Body of pancreas (tissue), 4 donors: ENCODE measurements at regions of chr20 and their contacts with region 1.

Region 1: DNA sequence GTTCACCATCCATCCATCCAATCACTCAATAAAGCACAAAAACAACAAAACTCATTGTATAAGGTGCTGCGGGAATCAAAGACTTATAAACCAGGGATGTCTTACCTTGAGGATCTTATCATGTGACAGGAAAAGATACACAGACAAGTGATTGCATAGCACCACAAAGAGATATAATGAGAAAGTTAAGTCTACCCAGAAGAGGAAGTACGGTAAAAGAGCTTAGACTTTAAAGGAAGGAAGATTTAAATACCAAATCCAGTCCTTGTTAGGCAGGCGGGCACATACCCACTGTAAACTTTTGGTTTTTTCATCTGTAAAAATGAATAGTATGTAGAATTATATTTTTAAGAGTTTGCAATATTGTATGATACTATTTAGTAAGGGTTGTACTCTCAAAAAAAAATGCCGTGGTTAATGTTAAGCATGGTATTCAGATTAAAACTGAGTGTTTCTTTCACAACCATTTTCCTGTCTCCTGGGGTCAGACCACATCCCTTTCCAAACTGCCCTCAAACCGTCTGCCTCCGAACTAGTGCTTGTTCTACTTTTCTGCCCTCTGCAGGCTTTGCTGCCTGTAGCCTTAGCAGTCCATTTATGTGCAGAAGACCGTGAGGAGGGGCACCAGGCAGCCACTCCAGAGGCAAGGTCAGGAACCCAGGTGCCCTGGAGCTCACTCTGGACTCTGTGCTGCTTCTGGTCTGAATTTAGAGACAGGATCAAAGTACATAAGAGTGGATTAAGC is 179.5 kb upstream of the SYNDIG1 start:
- DNase-seq: no peak
- ATAC-seq: no peak
- H3K4me3 ChIP-seq: no peak overlapping the region
- H3K27ac ChIP-seq: no peak overlapping the region
- H3K4me1 ChIP-seq: no peaks in the 10 kb centered on the region
- H3K27me3 ChIP-seq: no peaks in the 10 kb centered on the region
- CTCF ChIP-seq: no peak
- POLR2A ChIP-seq: no peak

Region 2: DNA sequence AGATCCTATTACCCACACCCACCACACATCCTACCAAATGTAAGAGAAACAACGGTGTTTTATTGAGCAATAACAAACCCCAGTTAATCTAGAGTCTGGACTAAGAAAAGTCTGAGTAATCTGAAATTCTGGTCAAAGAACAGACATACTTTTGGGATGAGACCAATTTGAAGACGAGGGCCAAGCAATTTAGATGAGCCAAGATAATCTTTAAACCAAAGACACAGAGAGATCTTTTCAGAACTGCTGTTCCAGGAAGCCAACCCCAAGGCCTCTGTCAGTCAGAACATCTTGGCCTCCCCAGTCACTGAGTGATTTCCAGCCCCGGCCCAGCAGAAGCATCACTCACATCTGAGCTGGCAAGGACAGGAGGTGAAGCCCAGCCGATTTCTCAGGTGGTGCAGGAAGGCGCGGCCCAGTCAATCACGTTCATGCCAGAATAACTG is 61.0 kb after region 1 on chr20:
- intact Hi-C with region 1: loop called (anchors 10 kb)
- DNase-seq: no peak
- ATAC-seq: no peak
- H3K4me3 ChIP-seq: no peak overlapping the region
- H3K27ac ChIP-seq: no peak overlapping the region
- H3K4me1 ChIP-seq: no peaks in the 10 kb centered on the region
- H3K27me3 ChIP-seq: no peaks in the 10 kb centered on the region
- CTCF ChIP-seq: no peak
- POLR2A ChIP-seq: no peak